Ovary (tissue), 10 donors: ENCODE measurements at regions of chr10 and their contacts with region 1.

Region 1: GRCh38 chr10:102009801-102010425 is 46.1 kb downstream of the ARMH3 start:
- DNase-seq: peak in 3 of 5 donors; percentile 30 to 57 (median 31)
- H3K4me3 ChIP-seq: no peak overlapping the region
- H3K27ac ChIP-seq: no peak overlapping the region
- H3K4me1 ChIP-seq: no peaks in the 10 kb centered on the region
- H3K27me3 ChIP-seq: no peaks in the 10 kb centered on the region
- CTCF ChIP-seq: peak; percentile 51 to 85 (median 72)
- EP300 ChIP-seq: no peak
- POLR2A ChIP-seq: no peak

Region 2: DNA sequence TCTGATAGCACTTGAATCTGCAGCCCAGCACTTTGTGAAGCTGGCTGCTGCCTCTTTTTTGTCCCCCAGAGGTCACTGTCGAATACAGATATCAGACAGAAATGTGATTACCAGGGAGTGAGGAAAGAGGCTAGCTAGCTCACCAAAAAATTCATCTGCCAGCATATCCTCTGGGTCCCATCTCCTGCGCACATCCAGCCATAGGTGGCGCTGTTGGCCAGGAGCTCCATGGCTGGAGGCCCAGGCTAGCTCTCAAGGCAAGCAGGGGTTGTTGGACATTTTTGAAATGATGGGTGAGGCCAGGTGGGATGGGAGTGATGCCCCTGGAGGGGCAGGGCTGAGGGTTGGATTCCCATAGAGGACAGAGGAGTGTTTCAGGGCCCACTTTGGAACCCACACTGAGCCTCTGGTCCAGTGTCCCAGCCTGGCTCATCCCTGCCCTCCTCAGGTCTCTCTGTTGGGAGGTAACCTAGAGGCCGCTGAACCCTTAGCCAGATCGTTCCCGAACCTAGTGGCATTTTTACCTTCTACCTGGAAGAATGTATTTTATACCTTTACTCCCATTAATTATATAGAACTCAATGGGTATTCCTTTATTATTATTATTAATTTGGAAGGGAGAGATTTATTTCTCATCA is 407.0 kb before region 1 on chr10:
- intact Hi-C with region 1: loop called in 1 of 4 experiments (anchors 10 kb)
- DNase-seq: peak; percentile 57 to 80 (median 70)
- H3K4me3 ChIP-seq: no peak overlapping the region
- H3K27ac ChIP-seq: no peak overlapping the region
- H3K4me1 ChIP-seq: no peaks in the 10 kb centered on the region
- H3K27me3 ChIP-seq: no peaks in the 10 kb centered on the region
- CTCF ChIP-seq: peak; percentile 56 to 67 (median 63)
- EP300 ChIP-seq: no peak
- POLR2A ChIP-seq: no peak

Region 3: DNA sequence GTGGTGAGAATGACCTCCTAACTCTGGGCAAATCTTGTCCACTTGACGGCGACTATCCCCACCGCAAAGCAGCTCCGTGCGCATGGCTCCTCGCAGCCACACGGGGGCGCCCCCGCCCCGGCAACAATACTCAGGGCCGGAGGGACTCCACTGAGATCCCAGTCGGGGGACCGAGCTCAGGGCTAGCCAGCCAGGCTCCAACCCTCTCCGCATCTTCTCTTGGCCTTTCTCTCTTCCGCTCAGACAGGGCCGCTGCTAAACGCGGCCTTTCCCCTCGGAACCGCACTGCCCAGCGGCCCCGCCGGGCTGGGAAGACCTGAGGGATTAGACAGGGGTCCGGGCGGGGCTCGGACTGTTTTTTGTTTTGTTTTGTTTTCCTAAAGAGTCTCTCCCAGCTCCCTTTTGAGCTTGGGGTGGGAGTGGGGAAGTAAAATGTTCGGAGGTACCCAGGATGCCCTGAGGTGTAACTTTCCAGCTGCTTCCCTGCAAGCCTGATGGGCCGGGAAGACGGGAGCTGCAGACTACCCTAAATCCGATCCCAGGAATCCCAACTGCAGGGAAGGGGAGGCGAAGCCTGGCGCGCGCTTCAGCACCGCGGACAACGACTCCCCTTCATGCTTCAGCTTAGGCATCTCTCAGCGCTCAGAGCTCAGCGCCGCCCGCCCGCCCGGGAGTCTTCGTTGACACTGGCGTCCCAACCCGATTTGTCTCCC is 169.0 kb before region 1 on chr10:
- intact Hi-C with region 1: loop called in 3 of 4 experiments (anchors 5 to 10 kb)
- DNase-seq: peak; percentile 67 to 86 (median 75)
- H3K4me3 ChIP-seq: peak overlapping the region; percentile 13
- H3K27ac ChIP-seq: no peak overlapping the region
- H3K4me1 ChIP-seq: peaks cover 8% of the 10 kb centered on the region
- H3K27me3 ChIP-seq: no peaks in the 10 kb centered on the region
- CTCF ChIP-seq: peak; percentile 46 to 66 (median 57)
- EP300 ChIP-seq: no peak
- POLR2A ChIP-seq: no peak

Region 4: GRCh38 chr10:101889256-101890210 is 120.4 kb before region 1 on chr10:
- intact Hi-C with region 1: loop called in 2 of 4 experiments (anchors 5 to 10 kb)
- DNase-seq: peak; percentile 35 to 75 (median 56)
- H3K4me3 ChIP-seq: no peak overlapping the region
- H3K27ac ChIP-seq: no peak overlapping the region
- H3K4me1 ChIP-seq: no peaks in the 10 kb centered on the region
- H3K27me3 ChIP-seq: no peaks in the 10 kb centered on the region
- CTCF ChIP-seq: peak in 1 of 3 donors; percentile 30
- EP300 ChIP-seq: no peak
- POLR2A ChIP-seq: no peak